Pancreas (tissue), 10 donors: ENCODE measurements at regions of chr1 and their contacts with region 1.

Region 1: GRCh38 chr1:19651141-19651737 is 7.1 kb downstream of the NBL1 start:
- DNase-seq: peak in 5 of 6 donors; percentile 32 to 74 (median 60)
- ATAC-seq: peak; percentile 74 to 86 (median 84)
- H3K4me3 ChIP-seq: no peak overlapping the region
- H3K27ac ChIP-seq: no peak overlapping the region
- H3K4me1 ChIP-seq: no peaks in the 10 kb centered on the region
- H3K27me3 ChIP-seq: no peaks in the 10 kb centered on the region
- CTCF ChIP-seq: peak in 3 of 4 donors; percentile 13 to 43 (median 36)

Region 2: DNA sequence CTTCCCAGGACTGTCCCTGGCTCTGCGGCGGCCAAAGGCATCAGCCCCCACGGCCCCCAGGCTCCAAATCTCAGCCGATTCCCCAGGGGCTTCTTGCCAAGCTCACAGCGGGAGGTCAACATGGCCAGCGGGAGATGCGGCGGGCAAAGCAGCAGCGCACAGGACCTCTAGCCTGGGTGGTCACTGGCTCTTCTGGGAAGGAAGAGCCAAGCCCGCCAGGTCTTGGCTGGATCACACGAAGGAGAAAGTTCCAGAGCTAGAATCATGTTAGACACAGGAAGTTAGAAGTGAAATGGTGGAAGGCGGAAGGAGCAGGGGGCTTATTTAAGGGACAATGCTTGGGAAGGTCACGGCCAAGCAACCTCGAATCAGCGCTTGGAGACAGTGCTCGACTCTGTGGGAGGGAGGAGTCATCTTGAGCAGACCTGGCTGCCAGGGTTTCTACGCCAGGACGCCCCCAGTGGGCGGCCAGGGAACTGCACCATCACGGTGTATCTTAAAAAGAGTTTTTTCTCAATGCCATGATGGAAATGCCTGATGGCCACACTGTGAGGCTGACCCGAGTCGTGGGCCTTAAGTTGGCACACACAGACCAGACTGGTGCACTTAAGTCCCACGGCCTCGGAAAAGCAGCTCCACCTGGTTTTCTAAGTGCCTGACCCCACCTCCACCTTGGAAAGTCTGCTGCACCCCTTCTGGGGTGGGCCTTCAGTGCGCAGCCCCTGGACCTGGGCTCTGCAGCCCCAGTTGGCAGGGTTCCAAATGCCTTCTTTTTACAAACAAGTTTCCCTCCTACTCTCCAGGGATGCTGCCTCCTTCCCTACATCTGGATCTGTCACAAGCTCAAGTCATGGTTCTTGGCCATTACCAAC is 309.8 kb before region 1 on chr1:
- intact Hi-C with region 1: loop called in 2 of 3 experiments (anchors 10 kb)
- DNase-seq: peak in 5 of 6 donors; percentile 47 to 90 (median 79)
- ATAC-seq: peak; percentile 59 to 78 (median 70)
- H3K4me3 ChIP-seq: no peak overlapping the region
- H3K27ac ChIP-seq: no peak overlapping the region
- H3K4me1 ChIP-seq: no peaks in the 10 kb centered on the region
- H3K27me3 ChIP-seq: no peaks in the 10 kb centered on the region
- CTCF ChIP-seq: peak; percentile 69 to 87 (median 84)

Region 3: GRCh38 chr1:19390901-19391595 is 260.2 kb before region 1 on chr1:
- intact Hi-C with region 1: loop called in 2 of 3 experiments (anchors 5 kb)
- DNase-seq: peak in 3 of 6 donors; percentile 17 to 29 (median 26)
- ATAC-seq: peak in 3 of 4 donors; percentile 71 to 75 (median 71)
- H3K4me3 ChIP-seq: no peak overlapping the region
- H3K27ac ChIP-seq: peak overlapping the region in 2 of 4 donors; percentile 25 to 63
- H3K4me1 ChIP-seq: peaks cover 3 to 4% (median 3%) of the 10 kb centered on the region in 3 donors
- H3K27me3 ChIP-seq: no peaks in the 10 kb centered on the region
- CTCF ChIP-seq: peak; percentile 25 to 65 (median 58)

Region 4: DNA sequence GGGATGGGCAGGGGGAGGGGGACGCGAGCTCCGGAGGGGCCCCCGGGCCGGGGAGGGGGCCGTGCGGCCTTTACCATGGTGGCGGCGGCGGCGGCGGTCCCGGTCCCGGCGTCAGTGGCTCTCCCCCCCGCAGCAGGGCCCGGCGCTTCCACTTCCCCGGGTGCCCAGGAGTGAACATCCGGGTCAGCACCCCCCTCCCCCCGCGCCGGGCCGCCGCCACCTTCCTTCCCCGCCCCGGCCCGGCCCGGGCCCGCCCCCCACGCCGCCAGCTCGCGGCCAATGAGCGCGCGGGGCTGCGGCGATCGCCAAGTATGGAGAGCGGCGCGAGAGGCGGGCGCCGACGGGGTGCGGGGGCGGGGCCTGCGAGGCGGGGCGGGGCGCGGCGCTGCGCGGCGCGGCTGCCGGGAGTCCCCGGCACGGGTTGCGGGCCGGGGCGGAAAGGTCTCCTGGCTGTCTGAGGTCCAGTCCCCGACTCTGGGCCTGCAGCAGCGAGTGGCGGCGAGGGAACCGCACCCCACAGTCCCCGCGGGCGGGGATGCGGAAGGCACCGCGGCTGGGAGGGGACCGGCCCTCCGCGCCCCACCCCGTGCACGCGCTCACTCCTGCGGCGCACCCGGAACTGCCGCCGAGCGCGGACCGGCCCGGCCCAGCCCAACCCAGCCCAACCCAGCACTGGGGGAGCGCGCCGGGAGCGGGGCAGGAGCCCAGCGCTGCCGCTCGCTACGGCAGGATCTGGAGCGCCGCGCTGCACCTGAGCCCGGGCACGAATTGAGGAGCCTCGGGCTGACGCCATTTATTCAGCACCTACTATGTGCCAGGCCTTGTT is 165.7 kb before region 1 on chr1 and contains the start of gene CAPZB:
- intact Hi-C with region 1: loop called in 1 of 3 experiments (anchors 10 kb)
- DNase-seq: peak; percentile 94 to 98 (median 96)
- ATAC-seq: peak; percentile 90 to 94 (median 91)
- H3K4me3 ChIP-seq: peak within 1 kb of the TSS; percentile 70 to 100 (median 88)
- H3K27ac ChIP-seq: peak within 1 kb of the TSS; percentile 80 to 95 (median 87)
- H3K4me1 ChIP-seq: peaks cover 0 to 24% (median 13%) of the 10 kb centered on the region in 3 donors
- H3K27me3 ChIP-seq: no peaks in the 10 kb centered on the region
- CTCF ChIP-seq: no peak
- total RNA-seq, gene CAPZB: 43.2 to 124 (median 69.3) TPM